ENCODE measurements at regions of chr19 and their contacts with region 1.

Region 1: DNA sequence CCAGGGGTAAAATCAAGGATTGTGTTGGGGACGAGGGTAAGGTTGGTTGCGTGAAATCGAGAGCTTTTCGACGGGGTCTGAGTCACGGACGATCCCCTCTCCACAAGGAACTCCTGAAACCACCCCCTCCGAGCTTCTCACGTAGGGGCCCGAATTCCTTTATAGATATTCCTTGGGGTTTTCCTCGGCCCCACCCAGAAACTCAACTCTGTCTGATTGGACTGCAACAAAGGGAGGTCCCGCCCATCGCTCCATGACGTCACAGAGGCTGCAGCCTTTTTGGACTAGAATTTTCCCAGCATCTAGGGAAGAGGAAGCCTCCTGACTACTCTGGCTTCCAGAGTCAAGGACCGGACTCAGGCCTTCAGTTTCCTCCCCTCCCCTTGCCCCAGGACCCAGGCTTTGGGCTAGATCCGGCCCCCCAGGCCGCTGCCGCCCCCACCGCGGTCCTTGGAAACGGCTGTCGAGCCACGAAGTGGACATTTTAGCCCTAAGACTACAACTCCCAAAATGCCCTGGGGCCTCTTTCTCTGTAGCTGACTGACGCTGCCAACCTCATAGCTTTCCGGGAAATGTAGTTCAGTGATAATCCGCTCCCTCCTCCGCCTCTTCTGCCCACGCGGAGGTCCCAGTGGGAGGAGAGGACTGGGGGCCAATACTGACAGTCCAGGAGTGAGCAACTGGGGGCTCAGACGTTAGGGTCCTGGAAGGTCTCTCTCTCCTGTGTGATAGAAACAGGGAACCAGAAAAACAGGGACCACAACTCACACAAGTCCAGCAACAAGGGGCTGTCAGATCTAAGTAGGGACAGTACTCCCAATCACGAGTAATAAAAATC is at the start of gene IZUMO1:
- DNase-seq: peak; percentile 62
- H3K4me3 Mint-ChIP-seq: peak within 1 kb of the TSS; percentile 63
- H3K27ac Mint-ChIP-seq: peak within 1 kb of the TSS; percentile 12
- H3K4me1 Mint-ChIP-seq: peaks cover 17% of the 10 kb centered on the region
- H3K27me3 Mint-ChIP-seq: peaks cover 4% of the 10 kb centered on the region
- total RNA-seq, gene IZUMO1: 0.37 TPM in 1 of 2 replicates, not detected in the other

Region 2: GRCh38 chr19:48419158-48419920 is 327.6 kb before region 1 on chr19:
- intact Hi-C with region 1: loop called (anchors 10 kb)
- DNase-seq: peak; percentile 66
- H3K4me3 Mint-ChIP-seq: peak overlapping the region; percentile 75
- H3K27ac Mint-ChIP-seq: peak overlapping the region; percentile 65
- H3K4me1 Mint-ChIP-seq: peaks cover 26% of the 10 kb centered on the region
- H3K27me3 Mint-ChIP-seq: peaks cover 18% of the 10 kb centered on the region

Region 3: GRCh38 chr19:48713864-48714758 is 32.8 kb before region 1 on chr19:
- intact Hi-C with region 1: loop called (anchors 1 kb)
- DNase-seq: peak; percentile 98
- H3K4me3 Mint-ChIP-seq: peak overlapping the region; percentile 80
- H3K27ac Mint-ChIP-seq: peak overlapping the region; percentile 83
- H3K4me1 Mint-ChIP-seq: peaks cover 8% of the 10 kb centered on the region
- H3K27me3 Mint-ChIP-seq: peaks cover 1% of the 10 kb centered on the region

Region 4: DNA sequence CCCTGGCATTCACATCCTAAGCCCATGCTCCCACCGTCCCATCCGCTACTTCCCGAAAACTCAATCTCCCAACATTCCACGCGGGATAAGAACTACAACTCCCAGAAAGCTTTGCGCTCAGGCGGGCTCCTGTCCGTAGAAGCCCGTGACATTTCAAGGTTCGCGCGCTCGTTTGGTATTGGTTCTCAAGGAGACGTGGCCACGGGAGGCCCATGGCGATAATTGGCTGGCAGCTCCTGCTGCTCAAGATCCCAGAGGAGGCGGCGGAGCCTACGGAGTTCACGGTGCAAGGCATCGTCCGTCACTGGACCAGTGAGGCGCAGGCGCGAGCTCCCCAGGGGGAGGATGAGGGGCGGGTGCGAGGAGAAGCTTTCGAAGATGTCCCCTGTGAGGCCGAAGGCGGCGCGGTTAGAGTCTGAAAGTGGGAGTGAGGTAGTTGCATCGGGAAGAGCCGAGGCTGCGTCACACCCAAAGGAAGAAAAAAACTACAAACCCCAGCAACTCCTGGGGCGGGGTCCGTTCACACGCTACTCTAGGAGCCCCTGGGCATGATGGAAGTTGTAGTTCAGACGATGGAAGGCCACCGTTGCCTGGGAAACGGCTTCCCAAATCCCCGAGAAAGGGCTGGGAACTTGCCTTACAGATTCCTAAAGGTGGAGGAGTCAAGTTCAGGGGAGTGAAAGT is 26.2 kb before region 1 on chr19:
- intact Hi-C with region 1: loop called (anchors 1 kb)
- DNase-seq: peak; percentile 91
- H3K4me3 Mint-ChIP-seq: peak overlapping the region; percentile 92
- H3K27ac Mint-ChIP-seq: peak overlapping the region; percentile 98
- H3K4me1 Mint-ChIP-seq: peaks cover 23% of the 10 kb centered on the region
- H3K27me3 Mint-ChIP-seq: no peaks in the 10 kb centered on the region